Gastrocnemius medialis (tissue), 4 donors: ENCODE measurements at regions of chr10 and their contacts with region 1.

Region 1: GRCh38 chr10:37976091-37976879 is at the start of gene ZNF25:
- DNase-seq: peak; percentile 98
- ATAC-seq: peak; percentile 99
- H3K4me3 ChIP-seq: peak within 1 kb of the TSS; percentile 71 to 95 (median 84)
- H3K27ac ChIP-seq: peak within 1 kb of the TSS; percentile 94 to 98 (median 96)
- H3K4me1 ChIP-seq: peaks cover 4 to 13% of the 10 kb centered on the region in 2 donors
- H3K27me3 ChIP-seq: no peaks in the 10 kb centered on the region
- CTCF ChIP-seq: peak; percentile 79 to 95 (median 89)
- POLR2A ChIP-seq: peak; percentile 81 to 84
- total RNA-seq, gene ZNF25: 18.8 to 35.0 (median 23.4) TPM

Region 2: DNA sequence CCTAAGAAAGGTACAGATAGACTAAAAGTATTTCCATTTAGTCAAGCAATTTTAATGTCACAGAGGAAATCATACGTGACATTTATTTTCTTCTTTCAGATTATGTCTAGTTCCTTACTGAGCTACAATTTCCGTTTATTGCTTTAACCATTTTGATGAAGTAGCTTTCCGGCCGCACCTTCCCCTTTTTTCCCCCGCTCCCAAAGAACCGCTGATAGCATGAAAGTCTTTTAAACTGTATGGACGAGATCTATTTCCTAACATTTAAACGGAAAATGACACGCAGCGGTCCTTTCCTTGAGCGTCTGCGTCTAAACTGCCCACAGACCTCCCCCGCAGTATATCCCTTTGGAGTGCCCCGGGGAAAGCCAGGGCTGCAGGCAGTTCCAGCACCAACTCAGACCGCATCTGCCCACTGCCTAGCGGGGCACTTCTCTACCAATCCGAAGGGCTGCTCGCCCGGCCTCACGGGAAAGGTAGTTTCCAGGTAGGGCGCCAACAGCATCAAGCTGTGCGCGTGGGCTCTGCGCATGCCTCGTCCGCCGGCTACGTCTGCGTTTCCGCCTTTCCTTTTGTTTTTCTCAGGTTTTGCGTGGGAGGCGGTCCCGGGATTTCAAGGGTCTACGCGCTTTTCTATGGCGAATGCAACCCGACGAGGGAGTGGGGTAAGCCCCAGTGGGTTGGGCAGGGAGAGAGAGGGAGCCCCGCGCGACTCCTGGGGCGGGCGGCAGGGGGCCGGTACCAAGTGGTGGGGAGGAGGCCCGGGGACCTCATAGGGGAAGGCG is 34.0 kb after region 1 on chr10 and contains the start of gene ZNF33A:
- in situ Hi-C with region 1: loop called in 1 of 4 experiments (anchors 5 kb)
- intact Hi-C with region 1: loop called (anchors 1 kb)
- DNase-seq: peak; percentile 90 to 94
- ATAC-seq: peak; percentile 96 to 98
- H3K4me3 ChIP-seq: peak within 1 kb of the TSS; percentile 82 to 95 (median 87)
- H3K27ac ChIP-seq: peak within 1 kb of the TSS; percentile 96 to 99 (median 98)
- H3K4me1 ChIP-seq: peaks cover 9 to 10% of the 10 kb centered on the region in 2 donors
- H3K27me3 ChIP-seq: no peaks in the 10 kb centered on the region
- CTCF ChIP-seq: peak in 1 of 5 experiments; percentile 27
- POLR2A ChIP-seq: peak; percentile 39 to 67
- total RNA-seq, gene ZNF33A: 14.3 to 31.1 (median 16.8) TPM

Region 3: DNA sequence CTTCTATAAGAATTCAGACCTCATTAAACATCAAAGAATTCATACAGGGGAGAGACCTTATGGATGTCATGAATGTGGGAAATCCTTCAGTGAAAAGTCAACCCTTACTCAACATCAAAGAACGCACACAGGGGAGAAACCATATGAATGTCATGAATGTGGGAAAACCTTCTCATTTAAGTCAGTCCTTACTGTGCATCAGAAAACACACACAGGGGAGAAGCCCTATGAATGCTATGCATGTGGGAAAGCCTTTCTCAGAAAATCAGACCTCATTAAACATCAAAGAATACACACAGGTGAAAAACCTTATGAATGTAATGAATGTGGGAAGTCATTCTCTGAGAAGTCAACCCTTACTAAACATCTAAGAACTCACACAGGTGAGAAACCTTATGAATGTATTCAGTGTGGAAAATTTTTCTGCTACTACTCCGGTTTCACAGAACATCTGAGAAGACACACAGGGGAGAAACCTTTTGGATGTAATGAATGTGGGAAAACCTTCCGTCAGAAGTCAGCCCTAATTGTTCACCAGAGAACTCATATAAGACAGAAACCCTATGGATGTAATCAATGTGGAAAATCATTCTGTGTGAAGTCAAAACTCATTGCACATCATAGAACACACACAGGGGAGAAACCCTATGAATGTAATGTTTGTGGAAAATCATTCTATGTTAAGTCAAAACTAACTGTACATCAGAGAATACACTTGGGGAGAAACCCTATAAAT is 142.0 kb after region 1 on chr10:
- in situ Hi-C with region 1: no loop called
- intact Hi-C with region 1: no loop called
- DNase-seq: no peak
- ATAC-seq: no peak
- H3K4me3 ChIP-seq: peak overlapping the region in 2 of 4 donors; percentile 15 to 16
- H3K27ac ChIP-seq: no peak overlapping the region
- H3K4me1 ChIP-seq: no peaks in the 10 kb centered on the region
- H3K27me3 ChIP-seq: no peaks in the 10 kb centered on the region
- CTCF ChIP-seq: no peak
- POLR2A ChIP-seq: no peak